OCI-LY7 (cell line): ENCODE measurements at regions of chr1 and their contacts with region 1.

Region 1: DNA sequence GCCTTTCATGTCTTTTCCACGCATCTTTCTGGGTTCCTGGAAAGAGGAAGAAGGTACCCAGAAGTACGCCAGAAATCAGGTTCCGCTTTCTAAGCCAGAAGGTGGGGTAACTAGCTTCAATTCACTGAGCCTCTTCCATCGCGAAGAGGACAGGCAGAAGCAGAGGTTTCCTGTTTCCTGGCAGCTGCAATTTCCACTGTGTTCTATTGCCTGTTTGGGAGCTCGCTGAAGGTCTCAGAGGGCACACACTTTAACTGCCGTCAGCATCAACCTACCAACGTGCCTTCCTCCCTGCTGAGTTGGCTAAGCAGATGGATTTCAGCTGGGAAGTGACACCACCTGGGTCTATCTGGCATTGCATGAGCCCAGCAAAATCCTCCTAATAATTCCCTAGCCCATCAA is 10.0 kb downstream of the NCF2 start:
- DNase-seq: peak; percentile 38
- H3K4me3 ChIP-seq: no peak overlapping the region
- H3K27ac ChIP-seq: no peak overlapping the region
- H3K4me1 ChIP-seq: peaks cover 37% of the 10 kb centered on the region
- CTCF ChIP-seq: peak; percentile 56

Region 2: DNA sequence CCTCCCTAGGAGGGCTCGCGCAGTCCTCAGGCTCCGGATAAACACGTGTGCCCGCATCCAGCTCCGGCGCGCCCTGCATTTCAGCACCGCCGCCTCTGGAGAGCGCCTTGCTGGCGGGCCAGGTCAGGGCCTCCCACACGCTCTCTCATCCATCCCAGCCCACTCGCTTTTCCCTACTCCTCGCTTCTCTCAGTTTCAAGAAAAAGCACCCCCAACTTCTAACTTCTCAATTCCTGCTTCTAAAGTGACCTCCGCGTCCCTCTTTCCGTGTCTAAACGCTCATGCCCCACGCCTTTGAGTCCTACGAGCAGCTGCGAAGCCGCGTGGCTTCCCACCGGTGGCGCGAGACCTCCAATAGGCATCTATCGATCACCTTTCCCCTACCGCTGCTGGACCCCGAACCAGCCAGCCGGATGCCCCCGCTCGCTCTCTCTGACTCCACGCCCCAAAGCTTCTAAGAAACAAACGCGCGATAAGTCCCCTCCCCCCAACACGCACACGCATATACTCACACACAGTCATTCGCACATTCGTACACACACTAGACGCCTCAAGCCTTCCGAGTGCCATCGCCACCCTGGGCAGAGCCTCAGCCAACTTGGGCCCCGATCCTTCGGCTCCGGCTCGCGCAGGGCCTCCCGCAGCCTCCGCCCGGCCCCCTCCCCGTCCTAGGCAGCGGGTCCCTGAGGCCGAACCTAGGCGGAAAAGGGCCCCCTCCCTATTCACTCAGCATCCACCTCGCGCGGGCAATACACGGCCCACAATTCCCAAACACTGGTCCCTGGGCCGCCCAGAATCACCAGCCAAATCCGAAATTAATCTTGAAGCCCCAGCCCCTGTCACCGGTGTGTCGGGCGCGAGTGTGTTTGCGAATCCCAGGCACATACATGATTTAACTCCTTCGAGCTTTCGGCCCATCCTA is 163.2 kb before region 1 on chr1:
- CTCF ChIA-PET with region 1: no interaction called
- POLR2A ChIA-PET with region 1: no interaction called
- intact Hi-C with region 1: no loop called
- DNase-seq: no peak
- H3K4me3 ChIP-seq: no peak overlapping the region
- H3K27ac ChIP-seq: no peak overlapping the region
- H3K4me1 ChIP-seq: no peaks in the 10 kb centered on the region
- CTCF ChIP-seq: no peak

Region 3: DNA sequence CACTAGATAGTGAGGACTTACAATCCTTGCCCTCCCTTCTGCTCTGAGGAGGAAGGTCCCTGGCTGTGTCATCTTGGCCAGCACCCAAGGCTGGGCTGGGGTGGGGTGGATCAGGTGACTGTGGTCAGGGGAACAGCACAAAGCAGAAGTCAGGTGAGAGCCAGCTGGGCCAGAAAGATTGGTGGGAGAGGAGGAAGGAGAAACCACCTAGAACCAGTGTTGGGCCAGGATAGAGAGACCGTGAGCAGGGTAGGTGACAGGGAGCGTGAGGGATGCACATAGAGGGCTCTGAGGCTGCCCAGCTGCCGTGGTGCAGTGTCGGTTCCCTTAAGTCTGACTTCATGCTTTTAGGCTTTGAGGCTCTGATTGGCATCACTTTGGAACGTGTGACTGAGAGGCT is 12.7 kb before region 1 on chr1:
- CTCF ChIA-PET with region 1: interaction called, 3 read pairs
- POLR2A ChIA-PET with region 1: interaction called, 14 read pairs
- intact Hi-C with region 1: no loop called
- DNase-seq: peak; percentile 21
- H3K4me3 ChIP-seq: no peak overlapping the region
- H3K27ac ChIP-seq: no peak overlapping the region
- H3K4me1 ChIP-seq: peaks cover 16% of the 10 kb centered on the region
- CTCF ChIP-seq: no peak

Region 4: GRCh38 chr1:183590244-183591191 is 10.2 kb after region 1 on chr1 and contains the start of gene NCF2:
- CTCF ChIA-PET with region 1: no interaction called
- POLR2A ChIA-PET with region 1: interaction called, 11 read pairs
- intact Hi-C with region 1: no loop called
- DNase-seq: peak; percentile 89
- H3K4me3 ChIP-seq: peak within 1 kb of the TSS; percentile 62
- H3K27ac ChIP-seq: peak within 1 kb of the TSS; percentile 95
- H3K4me1 ChIP-seq: peaks cover 69% of the 10 kb centered on the region
- CTCF ChIP-seq: peak; percentile 31; the same call in 1 of the 2 replicates
- total RNA-seq, gene NCF2: 4.0 and 5.0 TPM in 2 replicates

Region 5: GRCh38 chr1:183635606-183636333 is 55.5 kb after region 1 on chr1 and contains the start of gene ARPC5:
- CTCF ChIA-PET with region 1: no interaction called
- POLR2A ChIA-PET with region 1: no interaction called
- intact Hi-C with region 1: loop called (anchors 2 kb)
- DNase-seq: peak; percentile 95
- H3K4me3 ChIP-seq: peak within 1 kb of the TSS; percentile 94
- H3K27ac ChIP-seq: peak within 1 kb of the TSS; percentile 75
- H3K4me1 ChIP-seq: peaks cover 32% of the 10 kb centered on the region
- CTCF ChIP-seq: no peak
- total RNA-seq, gene ARPC5: 116 and 148 TPM in 2 replicates